Activated naive CD4-positive, alpha-beta T cell treated with anti-CD3 and anti-CD28 coated beads for 36 hours (primary cell): ENCODE measurements at regions of chr4 and their contacts with region 1.

Region 1: DNA sequence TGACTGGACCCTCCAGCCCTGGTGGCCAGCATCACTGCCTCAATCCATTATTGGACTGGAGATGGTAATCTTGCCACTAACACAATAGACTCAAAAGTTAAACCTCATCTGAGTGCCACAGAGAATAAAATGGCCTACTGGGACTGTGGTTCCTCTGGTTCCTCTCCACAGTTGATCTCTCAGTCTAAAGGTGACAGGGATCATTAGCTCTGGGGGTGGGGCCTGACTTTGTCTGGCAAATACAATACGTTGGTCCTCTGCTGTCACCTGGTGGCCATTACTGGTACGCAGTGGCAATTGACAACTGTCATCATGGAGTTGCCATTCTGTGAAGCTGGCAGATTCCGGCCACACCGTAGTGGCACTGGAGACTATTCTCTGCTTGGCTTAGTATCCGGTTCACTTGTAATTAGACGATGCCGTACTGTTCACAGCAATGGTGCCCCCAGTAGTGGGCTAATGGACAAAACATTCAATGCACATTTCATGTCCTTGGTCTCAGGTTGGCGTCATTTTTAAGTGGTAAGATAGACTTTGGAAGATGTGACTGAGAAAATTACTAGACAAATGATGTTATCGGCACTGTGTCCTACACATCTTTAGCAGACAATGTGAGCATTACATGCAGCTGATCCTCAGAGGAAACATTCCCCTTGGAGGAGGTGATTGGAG is 6.7 kb downstream of the FGFBP2 start:
- DNase-seq: peak; percentile 93
- H3K4me3 Mint-ChIP-seq: no peak overlapping the region
- H3K27ac Mint-ChIP-seq: no peak overlapping the region
- H3K4me1 Mint-ChIP-seq: no peaks in the 10 kb centered on the region
- H3K27me3 Mint-ChIP-seq: no peaks in the 10 kb centered on the region

Region 2: GRCh38 chr4:15729910-15730533 is 226.3 kb before region 1 on chr4:
- CTCF ChIA-PET with region 1: interaction called, 13 read pairs
- intact Hi-C with region 1: loop called (anchors 1 kb)
- DNase-seq: peak; percentile 54
- H3K4me3 Mint-ChIP-seq: no peak overlapping the region
- H3K27ac Mint-ChIP-seq: no peak overlapping the region
- H3K4me1 Mint-ChIP-seq: peaks cover 13% of the 10 kb centered on the region
- H3K27me3 Mint-ChIP-seq: no peaks in the 10 kb centered on the region